Left cardiac atrium (tissue), 4 donors: ENCODE measurements at regions of chr1 and their contacts with region 1.

Region 1: DNA sequence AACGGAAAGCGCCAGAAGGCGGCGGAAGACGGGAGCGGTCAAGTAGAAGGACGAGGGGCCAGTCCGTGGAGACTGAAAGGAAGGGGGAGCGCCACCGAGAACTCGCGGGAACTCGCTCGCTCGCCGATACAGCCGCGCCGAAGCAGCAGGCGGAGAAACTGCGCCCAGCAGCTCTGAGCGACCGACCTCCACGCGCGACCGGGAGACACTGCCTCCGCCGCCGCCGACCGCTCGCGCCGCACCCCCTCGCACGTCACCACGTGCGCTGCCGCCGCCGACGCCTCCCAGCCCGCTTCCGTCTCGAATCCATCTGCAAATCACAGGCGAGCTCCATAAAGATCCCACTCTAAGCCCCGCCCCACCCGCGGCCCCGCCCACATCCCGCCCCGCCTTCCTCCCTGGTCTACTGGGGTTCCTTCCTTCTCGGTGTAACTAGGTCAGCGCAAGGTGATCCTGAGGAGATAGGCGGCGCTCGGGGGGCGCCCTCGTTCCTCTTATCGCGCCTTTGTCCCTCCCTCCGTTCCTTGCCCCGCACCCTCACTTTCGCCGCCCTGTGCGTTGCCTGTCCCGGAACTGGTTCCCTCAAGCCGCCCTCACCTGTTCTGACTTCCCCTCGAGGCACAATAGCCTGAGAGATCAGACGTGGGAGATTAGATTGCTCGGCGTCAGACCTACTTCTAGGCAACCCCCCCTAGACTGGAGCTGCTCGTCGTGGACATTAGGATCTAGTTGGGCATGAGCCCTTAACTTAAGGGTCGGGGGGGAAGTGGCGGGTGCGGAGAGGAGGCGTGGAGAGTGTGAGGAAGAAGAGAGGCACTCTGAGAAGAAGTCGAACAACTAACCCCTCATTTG is at the start of gene IVNS1ABP:
- DNase-seq: peak; percentile 95
- ATAC-seq: peak; percentile 92 to 94
- total RNA-seq, gene IVNS1ABP: 33.2 to 33.3 TPM

Region 2: DNA sequence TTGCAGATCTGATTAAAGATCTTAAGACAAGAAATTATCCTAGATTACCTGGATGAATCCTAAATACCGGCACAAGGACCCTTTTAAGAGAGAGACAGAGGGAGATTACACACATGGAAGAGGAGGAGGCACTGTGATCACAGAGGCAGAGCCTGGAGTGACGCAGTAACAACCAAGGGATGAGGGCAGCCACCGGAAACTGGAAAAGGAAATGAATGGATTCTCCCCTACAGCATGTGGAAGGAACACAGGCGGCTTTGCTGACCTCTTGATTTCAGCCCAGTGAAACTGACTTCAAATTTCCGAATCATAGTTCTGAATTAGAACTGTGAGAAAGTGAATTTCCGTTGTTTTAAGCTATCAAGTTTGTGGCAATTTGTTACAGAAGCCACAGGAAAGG is 50.0 kb after region 1 on chr1:
- intact Hi-C with region 1: no loop called
- DNase-seq: peak; percentile 50
- ATAC-seq: peak; percentile 27 to 72

Region 3: DNA sequence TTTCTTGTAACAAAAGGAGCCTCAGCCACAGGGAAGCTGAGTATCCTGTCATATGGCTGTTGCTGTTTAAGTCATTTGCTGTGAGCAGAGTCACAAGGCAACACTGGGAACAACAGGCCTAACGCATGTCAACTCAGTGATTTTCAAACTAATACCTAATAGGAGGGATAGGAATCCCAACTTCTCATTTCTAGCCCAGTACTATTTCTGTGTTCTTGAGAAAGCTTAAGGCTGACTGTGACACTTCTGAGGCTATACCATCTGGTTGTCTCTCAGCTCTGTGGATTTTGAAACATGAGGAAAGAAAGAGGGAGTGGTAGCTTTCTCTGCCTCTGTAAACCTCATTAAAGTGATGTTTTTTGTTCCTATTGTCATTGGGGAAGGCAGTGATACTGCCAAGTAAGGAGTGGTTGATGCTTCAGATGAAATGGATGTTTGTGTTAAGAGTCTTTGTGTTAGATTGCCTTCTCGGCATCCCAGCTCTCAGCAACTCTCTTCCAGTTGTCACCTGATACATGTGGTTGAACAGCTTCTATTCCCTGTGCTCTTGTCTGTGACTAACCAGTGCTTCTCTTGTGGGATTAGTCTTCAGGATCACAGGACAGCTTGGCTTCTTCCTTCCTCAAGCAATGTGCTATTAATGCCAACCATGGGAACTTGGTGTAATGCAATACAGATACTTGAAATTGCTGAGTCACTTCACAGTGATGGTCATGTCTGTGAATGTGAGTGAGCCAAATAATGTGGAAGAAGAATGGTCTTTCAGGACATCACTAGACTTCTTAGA is 166.6 kb after region 1 on chr1:
- intact Hi-C with region 1: loop called in 1 of 2 experiments (anchors 10 kb)
- DNase-seq: no peak
- ATAC-seq: peak; percentile 62 to 88

Region 4: DNA sequence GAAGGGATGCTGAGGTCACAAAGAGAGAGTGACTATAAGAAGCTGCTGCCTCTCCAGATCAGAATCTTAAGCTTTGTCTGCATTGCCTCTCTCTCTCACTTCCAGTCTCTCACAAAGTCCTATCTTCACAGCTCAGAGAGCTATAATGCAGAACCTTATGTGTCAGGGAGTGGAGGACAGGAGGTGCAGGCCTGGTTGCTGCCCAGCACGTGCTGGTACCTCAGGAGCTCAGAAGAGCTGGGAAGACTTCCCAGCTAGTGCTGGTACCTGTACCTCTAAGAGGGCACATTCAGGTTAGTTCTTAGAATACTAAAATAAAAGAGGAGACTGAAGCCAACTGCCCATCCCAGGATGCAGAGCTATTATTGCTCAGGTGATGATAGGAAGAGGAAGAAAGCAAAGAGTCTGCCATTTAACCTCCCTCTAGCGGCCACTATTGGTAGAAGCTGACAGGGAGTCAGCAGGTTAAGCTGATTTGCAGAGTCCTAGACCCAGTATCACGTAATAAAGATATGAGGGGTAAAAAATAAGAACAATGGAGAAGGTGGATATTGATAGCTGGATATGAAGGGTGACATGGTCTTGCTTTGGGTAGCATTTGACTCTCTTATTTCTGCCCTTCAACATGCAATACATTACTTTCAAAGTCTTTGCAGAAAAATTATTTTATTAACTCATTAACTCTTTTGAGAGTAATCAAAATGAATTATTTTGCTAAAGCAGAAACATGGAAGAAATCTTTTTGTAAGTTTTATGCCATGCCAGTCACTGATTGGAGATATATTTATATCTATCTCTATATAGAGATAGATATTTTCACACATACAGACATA is 278.8 kb after region 1 on chr1:
- intact Hi-C with region 1: loop called in 1 of 2 experiments (anchors 10 kb)
- DNase-seq: no peak
- ATAC-seq: peak in 1 of 2 donors; percentile 46

Region 5: GRCh38 chr1:185670187-185670627 is 352.9 kb after region 1 on chr1:
- intact Hi-C with region 1: loop called (anchors 5 kb)
- DNase-seq: peak; percentile 28
- ATAC-seq: peak; percentile 69 to 76

Region 6: DNA sequence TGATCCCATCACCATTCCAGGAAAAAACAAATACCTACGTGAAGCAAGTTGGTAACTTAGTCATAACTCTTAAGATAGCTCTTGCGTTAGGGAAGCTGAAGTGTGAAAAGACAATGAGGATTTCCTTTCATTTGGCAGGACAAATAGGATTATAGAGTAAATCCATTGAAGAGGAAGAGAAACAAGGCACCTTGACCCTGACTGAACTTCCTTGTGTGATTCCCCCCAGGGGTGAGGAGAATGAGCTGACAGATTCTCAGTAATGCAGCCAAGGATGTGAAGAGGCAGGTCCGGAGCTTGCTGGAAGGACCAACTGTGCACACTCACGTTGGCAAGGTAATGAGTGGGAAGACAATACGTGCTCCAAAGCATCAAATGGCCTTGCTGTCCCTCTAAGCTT is 362.0 kb after region 1 on chr1:
- intact Hi-C with region 1: loop called (anchors 5 kb)
- DNase-seq: no peak
- ATAC-seq: peak; percentile 30 to 40